ENCODE measurements at regions of chr13 and their contacts with region 1.

Region 1: DNA sequence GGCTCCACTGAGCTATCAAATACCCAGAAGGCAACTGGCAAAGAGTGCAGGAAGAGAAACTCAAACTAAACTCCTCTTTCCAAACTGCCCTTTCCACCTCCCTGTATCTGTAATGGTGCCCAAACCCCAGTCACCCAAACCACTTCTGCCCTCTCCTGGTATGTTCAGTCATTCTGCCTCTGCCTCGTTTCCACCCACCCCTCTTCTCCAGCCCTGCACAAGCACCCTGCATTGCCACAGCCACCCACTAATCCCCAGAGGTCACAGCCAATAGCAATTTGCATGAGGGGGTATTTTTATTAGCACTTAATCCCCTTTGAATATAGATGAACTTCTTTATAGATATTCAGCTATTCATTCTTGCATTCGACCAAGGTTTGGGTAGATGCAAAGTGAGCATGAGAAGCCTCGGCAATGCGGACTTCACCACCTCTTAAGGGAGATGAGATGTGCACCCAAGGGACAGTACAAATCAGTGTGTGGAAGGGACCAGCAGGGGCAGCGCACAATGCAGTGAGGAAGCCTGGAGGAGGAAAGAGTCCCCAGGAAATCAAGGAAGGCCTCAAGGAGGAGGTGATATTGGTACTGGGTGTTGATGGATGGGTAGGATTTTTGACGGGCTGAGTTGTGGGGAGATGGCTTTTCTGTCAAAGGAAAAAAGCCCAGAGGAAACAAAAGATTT is 12.4 kb downstream of the TMEM272 start:
- DNase-seq: no peak
- ATAC-seq: peak; percentile 97
- H3K4me3 ChIP-seq: no peak overlapping the region
- H3K27ac ChIP-seq: no peak overlapping the region
- H3K4me1 ChIP-seq: no peaks in the 10 kb centered on the region
- H3K27me3 ChIP-seq: peaks cover 0 to 6% of the 10 kb centered on the region in 2 experiments; a peak in 3 of 4 replicates
- CTCF ChIP-seq: peak; percentile 44 to 75 (median 56)
- EP300 ChIP-seq: no peak
- POLR2A ChIP-seq: no peak
- RAD21 ChIP-seq: peak; percentile 65

Region 2: GRCh38 chr13:51803422-51804294 is 29.0 kb before region 1 on chr13 and contains the start of gene DHRS12:
- CTCF ChIA-PET with region 1: interaction called, 21 read pairs
- POLR2A ChIA-PET with region 1: interaction called, 3 read pairs
- RAD21 ChIA-PET with region 1: interaction called, 6 read pairs
- SMC1A ChIA-PET with region 1: interaction called, 6 read pairs
- in situ Hi-C with region 1: no loop called
- intact Hi-C with region 1: no loop called
- DNase-seq: peak; percentile 58
- ATAC-seq: peak; percentile 86
- H3K4me3 ChIP-seq: peak within 1 kb of the TSS; percentile 82
- H3K27ac ChIP-seq: peak within 1 kb of the TSS; percentile 91
- H3K4me1 ChIP-seq: peaks cover 17% of the 10 kb centered on the region
- H3K27me3 ChIP-seq: no peaks in the 10 kb centered on the region
- CTCF ChIP-seq: no peak; a peak in 1 of 6 replicates
- EP300 ChIP-seq: peak in 1 of 2 experiments; percentile 30; a peak in 1 of 4 replicates
- POLR2A ChIP-seq: peak; percentile 95
- RAD21 ChIP-seq: 0 out of 2 replicates have a peak, but pooled peaks have one; percentile 14
- polyA plus RNA-seq, gene DHRS12: 2.9 to 4.0 TPM

Region 3: GRCh38 chr13:51844862-51845573 is 12.4 kb after region 1 on chr13 and contains the start of gene TMEM272:
- CTCF ChIA-PET with region 1: interaction called, 10 read pairs
- POLR2A ChIA-PET with region 1: no interaction called
- RAD21 ChIA-PET with region 1: no interaction called
- SMC1A ChIA-PET with region 1: interaction called, 4 read pairs
- in situ Hi-C with region 1: no loop called
- intact Hi-C with region 1: no loop called
- DNase-seq: no peak
- ATAC-seq: peak; percentile 81
- H3K4me3 ChIP-seq: no peak within 1 kb of the TSS
- H3K27ac ChIP-seq: no peak within 1 kb of the TSS
- H3K4me1 ChIP-seq: no peaks in the 10 kb centered on the region
- H3K27me3 ChIP-seq: peaks cover 0 to 3% of the 10 kb centered on the region in 2 experiments; a peak in 2 of 4 replicates
- CTCF ChIP-seq: peak; percentile 63 to 93 (median 90)
- EP300 ChIP-seq: no peak
- POLR2A ChIP-seq: no peak
- RAD21 ChIP-seq: peak; percentile 47
- polyA plus RNA-seq, gene TMEM272: not detected